ENCODE measurements at regions of chr15 and their contacts with region 1.

Region 1: GRCh38 chr15:62389885-62390790 is 225.1 kb upstream of the C2CD4B start:
- DNase-seq: peak; percentile 94
- H3K4me3 ChIP-seq: peak within 1 kb of the TSS; percentile 98 to 99
- H3K27ac ChIP-seq: peak within 1 kb of the TSS; percentile 65 to 84
- H3K4me1 ChIP-seq: peaks cover 0 to 12% of the 10 kb centered on the region in 2 experiments; a peak in 3 of 4 replicates
- H3K27me3 ChIP-seq: no peaks in the 10 kb centered on the region
- CTCF ChIP-seq: no peak
- EP300 ChIP-seq: 0 out of 4 replicates have a peak, but pooled peaks of 1 of the 2 experiments have one; percentile 29
- RAD21 ChIP-seq: peak; percentile 1; the same call in 1 of the 2 replicates

Region 2: DNA sequence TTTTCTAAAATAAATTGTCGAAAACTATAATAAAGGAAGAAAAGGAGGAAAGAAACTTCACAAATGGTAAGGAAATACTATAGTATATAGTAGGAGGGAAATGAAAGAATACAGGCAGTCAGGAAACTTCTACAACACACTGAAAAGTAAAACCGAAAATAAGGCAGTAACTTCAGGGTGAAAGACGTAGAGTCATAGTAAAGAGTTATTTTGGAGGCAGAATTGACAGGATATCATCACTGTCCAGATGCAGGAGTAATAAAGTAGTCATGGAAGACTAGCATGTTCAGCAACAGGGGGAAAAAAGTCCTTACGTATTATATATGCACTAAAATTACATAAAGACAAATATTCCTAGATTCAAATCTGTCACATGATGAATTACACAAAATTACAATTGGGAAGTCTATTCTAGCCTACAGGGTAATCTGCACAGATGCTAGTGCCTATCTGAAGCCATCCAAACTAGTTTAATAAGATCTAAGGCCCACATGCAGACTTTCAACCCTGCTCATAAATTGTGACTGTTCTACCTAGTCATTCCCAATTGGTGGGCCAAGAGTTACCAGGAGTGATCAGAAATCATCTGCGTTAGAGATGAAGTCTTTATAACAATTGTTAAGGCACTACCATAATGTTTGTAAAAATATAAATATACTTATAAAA is 343.9 kb before region 1 on chr15:
- CTCF ChIA-PET with region 1: no interaction called
- POLR2A ChIA-PET with region 1: no interaction called
- DNase-seq: no peak
- H3K4me3 ChIP-seq: no peak overlapping the region
- H3K27ac ChIP-seq: no peak overlapping the region
- H3K4me1 ChIP-seq: no peaks in the 10 kb centered on the region; a peak in 1 of 4 replicates
- H3K27me3 ChIP-seq: no peaks in the 10 kb centered on the region
- CTCF ChIP-seq: no peak
- EP300 ChIP-seq: no peak
- RAD21 ChIP-seq: no peak

Region 3: DNA sequence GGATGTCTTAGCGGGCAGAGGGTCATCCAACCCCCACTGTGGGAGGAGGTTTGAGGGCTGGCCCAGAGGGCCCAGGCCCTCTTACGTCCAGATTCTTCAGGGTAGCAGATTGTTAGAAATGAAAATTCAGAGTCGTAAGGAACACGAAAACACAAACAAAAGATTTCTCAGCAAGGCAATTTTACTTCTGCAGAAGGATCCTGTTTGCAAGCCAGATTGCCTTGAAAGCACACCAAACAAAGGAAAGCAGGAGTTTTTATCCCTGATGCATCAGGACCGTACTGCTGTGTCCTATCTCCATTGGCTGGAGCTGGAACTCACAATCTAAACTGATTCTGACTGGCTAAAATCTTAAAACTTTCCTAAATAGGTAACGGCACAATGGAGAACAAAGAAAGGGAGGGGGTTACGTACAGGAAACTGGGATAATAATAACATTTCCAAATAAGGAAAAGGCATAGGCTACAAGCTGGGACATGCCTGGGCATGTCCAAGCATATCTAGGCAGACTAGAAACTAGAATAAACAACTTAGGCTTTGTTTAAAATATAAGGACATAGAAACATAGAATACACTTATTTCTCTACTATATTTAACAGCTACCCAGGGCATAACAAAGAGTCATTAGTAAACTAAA is 127.7 kb before region 1 on chr15:
- CTCF ChIA-PET with region 1: no interaction called
- POLR2A ChIA-PET with region 1: no interaction called
- DNase-seq: no peak
- H3K4me3 ChIP-seq: no peak overlapping the region
- H3K27ac ChIP-seq: no peak overlapping the region
- H3K4me1 ChIP-seq: no peaks in the 10 kb centered on the region
- H3K27me3 ChIP-seq: no peaks in the 10 kb centered on the region
- CTCF ChIP-seq: no peak
- EP300 ChIP-seq: no peak
- RAD21 ChIP-seq: no peak

Region 4: GRCh38 chr15:62306851-62307504 is 83.2 kb before region 1 on chr15:
- CTCF ChIA-PET with region 1: no interaction called
- POLR2A ChIA-PET with region 1: no interaction called
- DNase-seq: peak; percentile 72
- H3K4me3 ChIP-seq: peak overlapping the region in 1 of 2 experiments; percentile 17; a peak in 1 of 4 replicates
- H3K27ac ChIP-seq: peak overlapping the region; percentile 28 to 61; a peak in 2 of 4 replicates
- H3K4me1 ChIP-seq: peaks cover 8 to 15% of the 10 kb centered on the region in 2 experiments
- H3K27me3 ChIP-seq: no peaks in the 10 kb centered on the region
- CTCF ChIP-seq: peak; percentile 78
- EP300 ChIP-seq: no peak
- RAD21 ChIP-seq: peak; percentile 92

Region 5: GRCh38 chr15:62403164-62403809 is 13.1 kb after region 1 on chr15:
- CTCF ChIA-PET with region 1: interaction called, 33 read pairs
- POLR2A ChIA-PET with region 1: interaction called, 4 read pairs
- DNase-seq: no peak
- H3K4me3 ChIP-seq: no peak overlapping the region
- H3K27ac ChIP-seq: peak overlapping the region in 1 of 2 experiments; percentile 48; a peak in 2 of 4 replicates
- H3K4me1 ChIP-seq: peaks cover 5 to 7% of the 10 kb centered on the region in 2 experiments; a peak in 2 of 4 replicates
- H3K27me3 ChIP-seq: no peaks in the 10 kb centered on the region
- CTCF ChIP-seq: no peak
- EP300 ChIP-seq: peak in 1 of 2 experiments; percentile 38; a peak in 1 of 4 replicates
- RAD21 ChIP-seq: no peak

Region 6: GRCh38 chr15:62706317-62706716 is 316.2 kb after region 1 on chr15:
- CTCF ChIA-PET with region 1: interaction called, 23 read pairs
- POLR2A ChIA-PET with region 1: no interaction called
- DNase-seq: peak; percentile 56
- H3K4me3 ChIP-seq: no peak overlapping the region
- H3K27ac ChIP-seq: no peak overlapping the region
- H3K4me1 ChIP-seq: no peaks in the 10 kb centered on the region; a peak in 1 of 4 replicates
- H3K27me3 ChIP-seq: no peaks in the 10 kb centered on the region
- CTCF ChIP-seq: peak; percentile 66
- EP300 ChIP-seq: no peak
- RAD21 ChIP-seq: peak; percentile 85

Measured in SK-N-SH (cell line).